K562 (cell line): ENCODE measurements at regions of chr3 and their contacts with region 1.

Region 1: GRCh38 chr3:54232618-54233017 is 110.3 kb downstream of the CACNA2D3 start:
- DNase-seq: no peak
- ATAC-seq: no peak
- H3K4me3 ChIP-seq: no peak overlapping the region
- H3K27ac ChIP-seq: no peak overlapping the region
- H3K4me1 ChIP-seq: no peaks in the 10 kb centered on the region
- H3K27me3 ChIP-seq: no peaks in the 10 kb centered on the region
- CTCF ChIP-seq: no peak
- EP300 ChIP-seq: no peak
- POLR2A ChIP-seq: no peak
- RAD21 ChIP-seq: no peak

Region 2: DNA sequence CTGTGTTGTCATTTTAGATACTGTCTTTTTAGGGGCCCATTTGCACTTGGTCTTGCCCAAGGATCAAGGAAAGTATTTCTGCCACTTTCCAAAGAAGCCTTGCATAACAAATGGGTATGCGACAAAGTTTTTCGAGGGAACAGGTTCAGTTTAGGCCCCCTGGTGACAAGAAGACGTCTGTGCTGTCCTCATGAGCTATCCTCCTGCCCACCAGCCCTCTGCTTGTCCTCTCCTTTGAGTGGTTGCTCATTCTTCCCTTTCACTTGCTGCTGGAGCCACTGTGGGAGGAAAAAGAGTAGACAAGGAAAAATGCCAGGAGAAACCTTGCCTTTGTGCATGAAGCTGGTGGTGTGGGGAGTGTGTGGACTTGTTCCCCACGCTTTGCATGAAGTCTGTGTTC is 61.6 kb after region 1 on chr3:
- CTCF ChIA-PET with region 1: no interaction called
- POLR2A ChIA-PET with region 1: no interaction called
- in situ Hi-C with region 1: loop called (anchors 5 kb)
- intact Hi-C with region 1: no loop called
- DNase-seq: no peak
- ATAC-seq: no peak
- H3K4me3 ChIP-seq: no peak overlapping the region
- H3K27ac ChIP-seq: no peak overlapping the region
- H3K4me1 ChIP-seq: no peaks in the 10 kb centered on the region
- H3K27me3 ChIP-seq: no peaks in the 10 kb centered on the region
- CTCF ChIP-seq: 0 out of 6 replicates have a peak, but pooled peaks of 1 of the 3 experiments have one; percentile 9
- EP300 ChIP-seq: no peak
- POLR2A ChIP-seq: no peak
- RAD21 ChIP-seq: no peak

Region 3: GRCh38 chr3:54393150-54393549 is 160.5 kb after region 1 on chr3:
- CTCF ChIA-PET with region 1: no interaction called
- POLR2A ChIA-PET with region 1: no interaction called
- in situ Hi-C with region 1: no loop called
- intact Hi-C with region 1: no loop called
- DNase-seq: no peak
- ATAC-seq: no peak
- H3K4me3 ChIP-seq: no peak overlapping the region
- H3K27ac ChIP-seq: no peak overlapping the region
- H3K4me1 ChIP-seq: no peaks in the 10 kb centered on the region
- H3K27me3 ChIP-seq: no peaks in the 10 kb centered on the region
- CTCF ChIP-seq: no peak
- EP300 ChIP-seq: no peak
- POLR2A ChIP-seq: no peak
- RAD21 ChIP-seq: no peak